HCT116 (cell line): ENCODE measurements at regions of chr11 and their contacts with region 1.

Region 1: DNA sequence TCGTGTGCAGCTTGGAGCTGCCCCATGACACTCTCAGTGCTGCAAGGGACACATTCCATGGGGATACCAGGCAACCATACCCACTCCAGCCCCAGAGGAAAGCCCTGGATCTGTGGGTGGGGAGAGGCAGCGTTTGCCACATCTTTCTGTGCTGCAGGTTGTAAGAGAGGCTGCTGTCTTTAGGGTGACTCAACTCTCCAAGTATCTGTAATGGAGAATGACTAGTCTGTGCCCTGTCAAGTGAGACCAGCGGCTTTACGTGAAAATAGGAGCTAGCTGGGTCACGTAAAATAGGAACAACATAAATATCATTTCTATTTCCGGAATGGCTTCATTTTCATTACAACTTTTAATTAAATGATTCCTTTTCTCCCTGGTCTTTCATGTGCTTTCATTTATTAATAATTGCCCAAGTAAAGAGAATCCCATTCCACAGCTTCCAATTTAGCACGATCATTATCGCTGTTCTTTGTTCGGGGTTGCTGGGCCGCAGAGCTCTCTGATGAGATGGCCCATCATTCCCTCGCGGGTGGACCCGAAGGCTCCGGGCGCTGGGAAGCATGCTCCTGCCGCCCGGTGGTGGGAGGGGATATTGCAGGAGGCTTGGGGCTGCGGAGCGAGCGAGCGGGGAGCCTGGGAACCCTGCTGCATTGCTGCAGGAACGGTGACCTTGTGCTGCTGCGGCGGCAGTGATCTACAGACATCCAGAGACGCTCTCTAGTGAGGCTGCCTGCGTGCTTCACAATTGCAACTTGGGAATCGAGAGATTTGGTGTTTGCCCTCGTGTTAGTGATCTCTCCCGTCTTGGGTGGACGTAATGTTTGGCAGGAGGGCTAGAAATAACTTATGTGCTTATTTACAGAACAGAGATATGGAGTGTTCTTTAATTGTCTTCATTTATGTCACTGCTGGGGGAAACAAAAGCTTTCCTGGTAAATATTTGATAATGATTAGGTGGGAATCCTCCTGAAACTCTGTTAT is 10.6 kb downstream of the SLC6A5 start:
- DNase-seq: peak; percentile 41
- ATAC-seq: peak; percentile 97
- H3K4me3 ChIP-seq: peak overlapping the region in 1 of 2 experiments; percentile 11; a peak in 1 of 4 replicates
- H3K27ac ChIP-seq: no peak overlapping the region
- H3K4me1 ChIP-seq: peaks cover 0 to 9% of the 10 kb centered on the region in 2 experiments; a peak in 1 of 4 replicates
- H3K27me3 ChIP-seq: peaks cover 21% of the 10 kb centered on the region; the same call in 1 of the 2 replicates
- CTCF ChIP-seq: peak; percentile 71 to 90 (median 90); a peak in 5 of 6 replicates
- POLR2A ChIP-seq: no peak
- RAD21 ChIP-seq: peak; percentile 88

Region 2: DNA sequence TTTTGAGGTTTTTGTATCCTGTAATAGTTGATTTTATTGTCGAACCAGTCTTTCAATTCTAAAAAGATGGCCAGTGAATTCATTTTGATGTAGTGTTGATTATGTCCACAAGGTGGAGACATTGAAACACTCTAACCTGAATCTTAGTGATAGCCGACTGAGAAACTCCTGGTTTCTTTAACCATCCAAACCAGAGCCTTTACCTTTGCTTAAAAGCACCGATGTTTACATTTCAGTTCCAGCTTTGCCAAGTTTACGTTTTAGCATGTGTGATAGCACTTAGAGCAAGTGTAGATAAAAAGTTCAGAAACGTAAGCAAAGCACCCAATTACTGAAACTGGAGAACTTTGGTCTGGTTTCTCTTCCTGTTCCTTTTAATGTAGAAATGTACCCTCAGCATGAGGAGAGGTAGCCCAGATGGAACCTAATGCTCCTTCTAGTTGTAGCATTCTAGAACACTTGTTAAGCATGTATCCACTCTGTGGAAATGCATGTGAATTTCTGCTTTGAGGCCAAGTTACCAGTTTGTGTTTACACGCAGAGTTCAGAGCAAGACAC is 658.4 kb before region 1 on chr11:
- CTCF ChIA-PET with region 1: no interaction called
- POLR2A ChIA-PET with region 1: no interaction called
- RAD21 ChIA-PET with region 1: no interaction called
- intact Hi-C with region 1: loop called (anchors 5 kb)
- DNase-seq: peak; percentile 32
- ATAC-seq: peak; percentile 78
- H3K4me3 ChIP-seq: no peak overlapping the region
- H3K27ac ChIP-seq: no peak overlapping the region
- H3K4me1 ChIP-seq: peaks cover 0 to 2% of the 10 kb centered on the region in 2 experiments; a peak in 1 of 4 replicates
- H3K27me3 ChIP-seq: peaks cover 4% of the 10 kb centered on the region
- CTCF ChIP-seq: peak; percentile 47 to 69 (median 60); a peak in 4 of 6 replicates
- POLR2A ChIP-seq: no peak
- RAD21 ChIP-seq: peak; percentile 75

Region 3: GRCh38 chr11:20243974-20244373 is 366.0 kb before region 1 on chr11:
- CTCF ChIA-PET with region 1: no interaction called
- POLR2A ChIA-PET with region 1: no interaction called
- RAD21 ChIA-PET with region 1: no interaction called
- intact Hi-C with region 1: loop called (anchors 10 kb)
- DNase-seq: no peak
- ATAC-seq: peak; percentile 72
- H3K4me3 ChIP-seq: no peak overlapping the region
- H3K27ac ChIP-seq: no peak overlapping the region
- H3K4me1 ChIP-seq: no peaks in the 10 kb centered on the region
- H3K27me3 ChIP-seq: peaks cover 23% of the 10 kb centered on the region
- CTCF ChIP-seq: peak; percentile 40 to 69 (median 57); a peak in 5 of 6 replicates
- POLR2A ChIP-seq: no peak
- RAD21 ChIP-seq: peak; percentile 32; the same call in 1 of the 2 replicates

Region 4: GRCh38 chr11:20387241-20388095 is 222.5 kb before region 1 on chr11 and contains the start of gene PRMT3:
- CTCF ChIA-PET with region 1: no interaction called
- POLR2A ChIA-PET with region 1: no interaction called
- RAD21 ChIA-PET with region 1: no interaction called
- intact Hi-C with region 1: loop called (anchors 2 kb)
- DNase-seq: peak; percentile 84
- ATAC-seq: peak; percentile 90
- H3K4me3 ChIP-seq: peak within 1 kb of the TSS; percentile 90 to 99
- H3K27ac ChIP-seq: peak within 1 kb of the TSS; percentile 82
- H3K4me1 ChIP-seq: peaks cover 5 to 9% of the 10 kb centered on the region in 2 experiments; a peak in 3 of 4 replicates
- H3K27me3 ChIP-seq: no peaks in the 10 kb centered on the region
- CTCF ChIP-seq: peak in 2 of 3 experiments; percentile 85 to 95; a peak in 3 of 6 replicates
- POLR2A ChIP-seq: peak; percentile 67
- RAD21 ChIP-seq: peak; percentile 51
- total RNA-seq, gene PRMT3: 24.3 TPM

Region 5: GRCh38 chr11:20397281-20397680 is 212.7 kb before region 1 on chr11:
- CTCF ChIA-PET with region 1: interaction called, 13 read pairs
- POLR2A ChIA-PET with region 1: no interaction called
- RAD21 ChIA-PET with region 1: interaction called, 3 read pairs
- intact Hi-C with region 1: loop called (anchors 1 kb)
- DNase-seq: peak; percentile 36
- ATAC-seq: peak; percentile 80
- H3K4me3 ChIP-seq: no peak overlapping the region
- H3K27ac ChIP-seq: no peak overlapping the region
- H3K4me1 ChIP-seq: no peaks in the 10 kb centered on the region
- H3K27me3 ChIP-seq: no peaks in the 10 kb centered on the region
- CTCF ChIP-seq: peak; percentile 33 to 57 (median 55); a peak in 5 of 6 replicates
- POLR2A ChIP-seq: no peak
- RAD21 ChIP-seq: peak; percentile 25; the same call in 1 of the 2 replicates